CD8-positive, alpha-beta T cell (primary cell): ENCODE measurements at regions of chrX and their contacts with region 1.

Region 1: GRCh38 chrX:15335135-15336022 is at the start of gene PIGA:
- DNase-seq: peak; percentile 82 to 96 (median 89)
- ATAC-seq: peak; percentile 90
- H3K4me3 ChIP-seq: peak within 1 kb of the TSS; percentile 85 to 91
- H3K4me3 Mint-ChIP-seq: peak within 1 kb of the TSS; percentile 93
- H3K27ac ChIP-seq: peak within 1 kb of the TSS; percentile 86 to 92
- H3K27ac Mint-ChIP-seq: peak within 1 kb of the TSS; percentile 97
- H3K4me1 ChIP-seq: peaks cover 8% of the 10 kb centered on the region
- H3K4me1 Mint-ChIP-seq: peaks cover 26% of the 10 kb centered on the region
- H3K27me3 ChIP-seq: no peaks in the 10 kb centered on the region
- H3K27me3 Mint-ChIP-seq: peaks cover 6% of the 10 kb centered on the region
- CTCF ChIP-seq: no peak
- total RNA-seq, gene PIGA: 135 to 143 TPM

Region 2: DNA sequence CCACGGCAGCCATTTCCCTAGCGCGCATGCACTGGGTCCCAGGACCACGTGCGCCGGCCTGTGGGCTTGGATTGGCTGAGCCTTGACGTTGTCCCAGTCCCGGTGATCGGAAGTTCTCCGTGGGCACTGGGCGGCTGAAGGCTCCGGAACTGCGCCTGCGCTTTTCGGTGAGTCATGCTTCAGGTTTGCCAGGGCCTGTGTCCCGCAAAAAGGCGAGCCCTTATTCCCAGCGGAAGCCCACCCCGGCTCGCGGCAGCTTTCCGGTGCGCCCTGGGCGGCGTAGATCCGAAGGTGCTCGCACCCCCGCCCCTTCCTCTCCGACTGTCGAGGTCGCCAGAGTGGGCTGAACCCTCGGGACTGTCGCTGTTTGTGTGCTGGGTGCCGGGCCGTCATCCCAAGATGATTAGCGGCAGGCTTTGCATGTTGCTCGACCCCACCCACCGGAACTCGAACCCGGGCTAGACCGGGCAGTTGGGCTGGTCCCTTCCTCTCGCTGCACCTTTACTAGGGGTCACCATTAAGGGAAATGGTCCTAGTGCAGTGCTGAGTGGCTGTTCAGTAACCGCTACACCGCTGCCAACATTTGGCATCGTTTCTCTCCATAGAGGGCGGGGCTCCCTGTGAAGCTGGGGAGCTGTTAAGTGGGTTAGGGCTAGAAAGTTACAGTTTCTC is 1682.2 kb before region 1 on chrX and contains the start of gene TCEANC:
- CTCF ChIA-PET with region 1: no interaction called
- POLR2A ChIA-PET with region 1: no interaction called
- intact Hi-C with region 1: loop called in 1 of 2 experiments (anchors 5 kb)
- DNase-seq: peak; percentile 82 to 97 (median 95)
- ATAC-seq: peak; percentile 93
- H3K4me3 ChIP-seq: peak within 1 kb of the TSS; percentile 63 to 90
- H3K4me3 Mint-ChIP-seq: peak within 1 kb of the TSS; percentile 92
- H3K27ac ChIP-seq: peak within 1 kb of the TSS; percentile 85 to 95
- H3K27ac Mint-ChIP-seq: peak within 1 kb of the TSS; percentile 98
- H3K4me1 ChIP-seq: peaks cover 17% of the 10 kb centered on the region
- H3K4me1 Mint-ChIP-seq: peaks cover 30% of the 10 kb centered on the region
- H3K27me3 ChIP-seq: no peaks in the 10 kb centered on the region
- H3K27me3 Mint-ChIP-seq: no peaks in the 10 kb centered on the region
- CTCF ChIP-seq: no peak
- total RNA-seq, gene TCEANC: 8.2 to 9.5 TPM

Region 3: DNA sequence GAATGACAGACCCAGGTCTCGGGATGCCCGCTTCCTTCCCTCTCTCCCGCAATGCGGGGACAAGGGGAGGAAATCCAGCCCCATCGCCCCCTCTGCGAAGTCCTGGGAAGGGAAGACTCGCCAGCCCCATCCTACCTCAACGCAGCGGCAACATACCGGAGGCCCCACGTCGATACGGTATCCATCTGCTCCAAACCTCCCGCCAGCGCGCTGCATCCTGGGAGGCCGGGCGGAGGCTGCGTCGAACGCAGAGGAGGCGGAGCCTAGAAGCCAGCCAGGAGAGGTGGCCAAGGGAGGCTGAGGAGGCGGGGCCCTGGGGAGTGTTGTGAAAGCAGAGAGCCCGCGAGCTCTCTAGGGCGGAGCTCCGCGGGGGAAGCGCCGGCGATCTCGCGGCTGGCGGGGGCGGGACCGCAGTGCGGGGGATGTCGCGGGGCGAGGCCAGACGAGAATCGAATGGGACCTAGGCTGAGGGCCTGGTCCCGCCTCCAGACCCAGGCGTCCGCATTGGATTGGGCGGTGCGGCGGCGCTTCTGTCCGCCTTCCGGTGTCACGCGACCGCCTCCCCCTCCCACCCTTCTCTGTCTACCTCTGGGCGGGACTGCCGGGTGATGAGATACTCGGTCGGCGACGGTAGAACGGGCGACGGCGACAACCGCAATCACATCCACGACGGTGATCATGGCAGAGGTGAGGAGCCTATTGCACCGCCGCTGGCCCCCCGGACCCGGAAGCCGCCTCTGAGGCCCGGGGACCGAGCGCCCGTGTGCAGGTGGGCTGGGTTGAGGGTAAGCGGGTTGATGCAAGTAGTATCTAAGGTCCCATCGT is 462.3 kb before region 1 on chrX and contains the starts of genes FANCB and MOSPD2:
- CTCF ChIA-PET with region 1: no interaction called
- POLR2A ChIA-PET with region 1: no interaction called
- intact Hi-C with region 1: loop called in 1 of 2 experiments (anchors 5 kb)
- DNase-seq: peak; percentile 85 to 97 (median 92)
- ATAC-seq: peak; percentile 89
- H3K4me3 ChIP-seq: peak within 1 kb of the TSS; percentile 81 to 83
- H3K4me3 Mint-ChIP-seq: peak within 1 kb of the TSS; percentile 84
- H3K27ac ChIP-seq: peak within 1 kb of the TSS; percentile 79 to 86
- H3K27ac Mint-ChIP-seq: peak within 1 kb of the TSS; percentile 92
- H3K4me1 ChIP-seq: peaks cover 9% of the 10 kb centered on the region
- H3K4me1 Mint-ChIP-seq: peaks cover 21% of the 10 kb centered on the region
- H3K27me3 ChIP-seq: no peaks in the 10 kb centered on the region
- H3K27me3 Mint-ChIP-seq: no peaks in the 10 kb centered on the region
- CTCF ChIP-seq: no peak
- total RNA-seq, gene FANCB: 2.5 to 3.1 TPM
- total RNA-seq, gene MOSPD2: 4.2 to 4.6 TPM

Region 4: GRCh38 chrX:15073313-15073712 is 262.1 kb before region 1 on chrX:
- CTCF ChIA-PET with region 1: no interaction called
- POLR2A ChIA-PET with region 1: no interaction called
- intact Hi-C with region 1: no loop called
- DNase-seq: no peak
- ATAC-seq: no peak
- H3K4me3 ChIP-seq: no peak overlapping the region
- H3K4me3 Mint-ChIP-seq: no peak overlapping the region
- H3K27ac ChIP-seq: no peak overlapping the region
- H3K27ac Mint-ChIP-seq: no peak overlapping the region
- H3K4me1 ChIP-seq: no peaks in the 10 kb centered on the region
- H3K4me1 Mint-ChIP-seq: no peaks in the 10 kb centered on the region
- H3K27me3 ChIP-seq: no peaks in the 10 kb centered on the region
- H3K27me3 Mint-ChIP-seq: peaks cover 2% of the 10 kb centered on the region
- CTCF ChIP-seq: no peak

Region 5: DNA sequence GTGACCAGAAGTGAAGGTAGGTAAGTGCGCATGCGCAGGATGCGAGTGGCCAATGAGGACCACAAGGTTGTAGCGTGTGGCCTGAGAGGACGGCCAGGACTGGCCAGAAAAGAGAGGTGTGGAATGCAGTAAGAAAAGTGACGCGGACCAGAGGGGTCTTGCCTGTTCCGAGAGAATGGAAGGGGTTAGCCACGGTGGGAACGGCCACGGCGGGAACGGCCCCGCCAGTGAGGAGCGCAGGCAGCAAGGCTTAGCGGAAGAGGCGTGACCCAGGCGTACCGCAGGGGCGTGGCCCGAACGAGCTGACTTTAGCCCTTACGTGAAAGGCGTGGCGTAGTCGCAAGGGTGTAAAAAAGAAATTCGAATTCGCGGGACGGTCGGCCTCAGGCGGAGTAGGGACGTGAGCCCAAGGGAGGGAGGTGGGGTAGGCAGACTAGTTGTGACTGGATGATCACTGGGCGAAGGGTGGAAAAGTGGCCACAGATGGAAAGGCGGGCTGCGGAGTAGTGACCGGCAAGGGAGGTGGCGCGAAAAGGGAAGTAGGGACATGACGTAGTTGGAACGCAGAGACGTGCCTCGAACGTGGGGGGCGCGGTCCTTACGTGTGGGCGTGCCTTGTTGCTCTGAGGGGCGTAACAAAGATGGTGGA is 339.6 kb after region 1 on chrX:
- CTCF ChIA-PET with region 1: no interaction called
- POLR2A ChIA-PET with region 1: no interaction called
- intact Hi-C with region 1: loop called (anchors 1 to 5 kb)
- DNase-seq: peak; percentile 75 to 96 (median 90)
- ATAC-seq: peak; percentile 86
- H3K4me3 ChIP-seq: peak overlapping the region; percentile 89 to 99
- H3K4me3 Mint-ChIP-seq: no peak overlapping the region
- H3K27ac ChIP-seq: peak overlapping the region; percentile 100
- H3K27ac Mint-ChIP-seq: no peak overlapping the region
- H3K4me1 ChIP-seq: peaks cover 16% of the 10 kb centered on the region
- H3K4me1 Mint-ChIP-seq: peaks cover 27% of the 10 kb centered on the region
- H3K27me3 ChIP-seq: no peaks in the 10 kb centered on the region
- H3K27me3 Mint-ChIP-seq: no peaks in the 10 kb centered on the region
- CTCF ChIP-seq: no peak

Region 6: GRCh38 chrX:16719334-16720084 is 1384.1 kb after region 1 on chrX and contains the start of gene SYAP1:
- CTCF ChIA-PET with region 1: no interaction called
- POLR2A ChIA-PET with region 1: no interaction called
- intact Hi-C with region 1: loop called (anchors 10 kb)
- DNase-seq: peak; percentile 84 to 99 (median 91)
- ATAC-seq: peak; percentile 84
- H3K4me3 ChIP-seq: peak within 1 kb of the TSS; percentile 61 to 87
- H3K4me3 Mint-ChIP-seq: peak within 1 kb of the TSS; percentile 91
- H3K27ac ChIP-seq: peak within 1 kb of the TSS; percentile 95 to 98
- H3K27ac Mint-ChIP-seq: peak within 1 kb of the TSS; percentile 99
- H3K4me1 ChIP-seq: peaks cover 17% of the 10 kb centered on the region
- H3K4me1 Mint-ChIP-seq: peaks cover 34% of the 10 kb centered on the region
- H3K27me3 ChIP-seq: no peaks in the 10 kb centered on the region
- H3K27me3 Mint-ChIP-seq: no peaks in the 10 kb centered on the region
- CTCF ChIP-seq: no peak
- total RNA-seq, gene SYAP1: 71.1 to 76.5 TPM

Region 7: DNA sequence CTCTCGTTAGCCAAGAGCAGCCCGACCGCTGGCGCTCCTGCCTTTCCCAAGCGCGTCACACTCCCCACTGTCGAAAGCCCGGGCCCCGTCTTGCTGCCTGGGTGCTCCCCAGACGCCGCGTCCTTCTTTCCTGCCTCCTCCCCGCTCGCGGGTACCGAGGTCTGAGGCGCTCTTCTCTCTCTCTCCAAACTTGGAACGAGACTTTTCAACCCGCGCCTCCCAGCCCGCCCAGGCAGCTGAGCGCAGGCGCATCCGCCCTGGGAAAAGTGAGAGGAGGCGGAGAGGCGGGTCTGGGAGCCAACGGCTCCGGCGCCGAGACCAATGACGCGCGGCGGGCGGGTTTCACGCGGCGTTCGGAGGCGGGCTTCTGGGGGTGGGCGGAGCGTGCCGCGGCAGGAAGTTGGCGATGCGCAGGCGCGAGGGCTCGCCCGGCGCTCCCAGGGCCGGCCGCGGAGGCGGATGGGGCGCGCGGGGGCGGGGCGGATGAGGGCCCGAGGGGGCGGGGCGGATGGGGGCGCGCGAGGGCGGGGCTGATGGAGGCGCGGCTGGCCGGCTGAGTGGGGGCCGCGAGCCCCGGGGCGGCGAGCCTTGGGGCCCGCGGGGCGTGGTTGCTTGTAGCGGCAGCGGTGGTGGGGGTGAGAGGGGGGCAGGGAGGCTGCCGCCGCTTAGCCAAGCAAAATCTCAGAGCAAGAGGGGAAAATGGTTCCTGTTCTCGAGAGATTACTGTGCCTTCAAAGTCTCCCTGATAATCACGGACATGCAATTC is 1534.9 kb after region 1 on chrX and contains the start of gene RBBP7:
- CTCF ChIA-PET with region 1: no interaction called
- POLR2A ChIA-PET with region 1: no interaction called
- intact Hi-C with region 1: loop called in 1 of 2 experiments (anchors 2 kb)
- DNase-seq: peak; percentile 83 to 97 (median 89)
- ATAC-seq: peak; percentile 80
- H3K4me3 ChIP-seq: peak within 1 kb of the TSS; percentile 73 to 82
- H3K4me3 Mint-ChIP-seq: peak within 1 kb of the TSS; percentile 94
- H3K27ac ChIP-seq: peak within 1 kb of the TSS; percentile 91 to 97
- H3K27ac Mint-ChIP-seq: peak within 1 kb of the TSS; percentile 97
- H3K4me1 ChIP-seq: peaks cover 20% of the 10 kb centered on the region
- H3K4me1 Mint-ChIP-seq: peaks cover 42% of the 10 kb centered on the region
- H3K27me3 ChIP-seq: no peaks in the 10 kb centered on the region
- H3K27me3 Mint-ChIP-seq: no peaks in the 10 kb centered on the region
- CTCF ChIP-seq: no peak
- total RNA-seq, gene RBBP7: 130 to 131 TPM